ENCODE measurements at regions of chr14 and their contacts with region 1.

Region 1: DNA sequence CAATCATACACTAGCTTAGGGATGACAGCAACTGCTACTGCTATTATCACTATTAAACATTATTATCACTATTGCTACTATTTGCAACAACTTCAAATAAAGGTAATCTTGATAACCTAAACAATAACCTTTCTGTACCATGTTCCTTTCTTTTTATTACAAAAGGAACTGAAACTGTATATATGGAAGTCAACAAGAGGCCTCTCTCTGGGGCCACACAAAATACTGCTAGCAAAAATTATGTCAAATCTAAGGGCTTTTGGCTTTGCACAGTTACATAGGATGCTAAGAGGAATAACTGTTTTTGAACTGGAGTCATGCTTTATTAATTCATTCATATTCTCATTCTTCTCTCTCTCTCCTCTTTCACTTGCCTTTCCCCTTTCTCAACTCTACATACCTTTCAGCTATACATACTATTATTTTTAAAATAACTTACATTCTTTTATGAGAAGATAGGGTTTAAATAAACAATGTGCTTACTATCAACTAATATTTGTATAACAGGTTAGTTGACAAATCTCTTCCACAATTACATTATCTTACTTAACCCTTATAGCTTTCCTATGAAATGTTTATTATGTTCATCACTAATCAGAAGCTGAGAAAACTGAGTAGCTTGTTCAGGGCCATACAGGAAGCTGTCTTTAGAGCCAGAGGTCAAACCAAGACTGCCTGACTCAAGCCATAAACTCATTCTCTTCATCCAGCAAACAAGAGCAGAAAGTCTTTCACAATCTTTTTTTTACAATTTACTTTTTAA is 25.7 kb downstream of the SPTSSA start:
- DNase-seq: peak in 1 of 2 experiments; percentile 90
- H3K4me3 ChIP-seq: no peak overlapping the region
- H3K27ac ChIP-seq: peak overlapping the region; percentile 41
- H3K4me1 ChIP-seq: peaks cover 24% of the 10 kb centered on the region
- H3K27me3 ChIP-seq: no peaks in the 10 kb centered on the region
- CTCF ChIP-seq: no peak

Region 2: DNA sequence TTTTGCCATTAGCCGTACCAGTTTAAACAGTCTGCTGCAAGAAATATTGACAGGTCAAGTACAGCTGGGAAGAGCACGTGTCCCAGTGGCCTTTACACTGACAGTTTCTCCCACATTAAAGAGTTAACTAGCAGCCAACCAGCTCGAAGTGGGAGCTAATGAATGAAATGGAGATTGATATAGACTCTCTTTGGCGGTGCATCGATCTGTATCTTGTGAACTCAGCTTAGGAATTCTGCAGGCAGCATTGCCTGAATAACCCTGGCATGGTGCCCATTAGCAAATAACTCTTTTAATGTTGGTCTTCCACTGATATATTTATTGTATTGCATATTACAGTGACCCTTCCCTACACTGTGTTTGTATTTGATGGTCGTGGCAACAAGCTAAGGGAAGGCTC is 804.8 kb before region 1 on chr14:
- CTCF ChIA-PET with region 1: no interaction called
- POLR2A ChIA-PET with region 1: no interaction called
- intact Hi-C with region 1: no loop called
- DNase-seq: no peak
- H3K4me3 ChIP-seq: no peak overlapping the region
- H3K27ac ChIP-seq: no peak overlapping the region
- H3K4me1 ChIP-seq: no peaks in the 10 kb centered on the region
- H3K27me3 ChIP-seq: no peaks in the 10 kb centered on the region
- CTCF ChIP-seq: no peak

Region 3: DNA sequence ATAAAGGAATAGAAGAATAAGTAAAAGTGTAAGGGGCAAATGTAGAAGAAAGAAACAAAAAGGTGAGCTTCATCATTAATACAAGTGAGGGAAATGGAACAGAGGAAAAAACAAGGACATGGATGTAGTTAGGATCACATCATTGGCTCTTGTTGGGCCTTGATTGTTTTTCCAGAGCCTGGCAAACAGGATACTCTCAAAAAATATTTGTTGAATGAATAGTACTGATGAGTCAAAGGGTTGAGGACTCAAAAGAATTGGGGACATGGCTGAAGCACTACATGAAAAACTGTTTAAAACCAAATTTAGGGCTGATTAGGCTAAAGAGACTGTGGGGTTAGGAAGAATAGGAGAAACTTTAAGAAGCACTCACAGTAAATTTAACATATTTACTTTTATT is 535.1 kb after region 1 on chr14:
- CTCF ChIA-PET with region 1: no interaction called
- POLR2A ChIA-PET with region 1: interaction called, 12 read pairs
- intact Hi-C with region 1: no loop called
- DNase-seq: no peak
- H3K4me3 ChIP-seq: no peak overlapping the region
- H3K27ac ChIP-seq: no peak overlapping the region
- H3K4me1 ChIP-seq: no peaks in the 10 kb centered on the region
- H3K27me3 ChIP-seq: no peaks in the 10 kb centered on the region
- CTCF ChIP-seq: no peak